CD8-positive, alpha-beta T cell (primary cell): ENCODE measurements at regions of chr1 and their contacts with region 1.

Region 1: GRCh38 chr1:11114966-11115365 is 15.3 kb upstream of the EXOSC10 start:
- DNase-seq: no peak
- ATAC-seq: no peak
- H3K4me3 ChIP-seq: no peak overlapping the region
- H3K4me3 Mint-ChIP-seq: no peak overlapping the region
- H3K27ac ChIP-seq: no peak overlapping the region
- H3K27ac Mint-ChIP-seq: no peak overlapping the region
- H3K4me1 ChIP-seq: no peaks in the 10 kb centered on the region
- H3K4me1 Mint-ChIP-seq: no peaks in the 10 kb centered on the region
- H3K27me3 ChIP-seq: no peaks in the 10 kb centered on the region
- H3K27me3 Mint-ChIP-seq: no peaks in the 10 kb centered on the region
- CTCF ChIP-seq: no peak

Region 2: DNA sequence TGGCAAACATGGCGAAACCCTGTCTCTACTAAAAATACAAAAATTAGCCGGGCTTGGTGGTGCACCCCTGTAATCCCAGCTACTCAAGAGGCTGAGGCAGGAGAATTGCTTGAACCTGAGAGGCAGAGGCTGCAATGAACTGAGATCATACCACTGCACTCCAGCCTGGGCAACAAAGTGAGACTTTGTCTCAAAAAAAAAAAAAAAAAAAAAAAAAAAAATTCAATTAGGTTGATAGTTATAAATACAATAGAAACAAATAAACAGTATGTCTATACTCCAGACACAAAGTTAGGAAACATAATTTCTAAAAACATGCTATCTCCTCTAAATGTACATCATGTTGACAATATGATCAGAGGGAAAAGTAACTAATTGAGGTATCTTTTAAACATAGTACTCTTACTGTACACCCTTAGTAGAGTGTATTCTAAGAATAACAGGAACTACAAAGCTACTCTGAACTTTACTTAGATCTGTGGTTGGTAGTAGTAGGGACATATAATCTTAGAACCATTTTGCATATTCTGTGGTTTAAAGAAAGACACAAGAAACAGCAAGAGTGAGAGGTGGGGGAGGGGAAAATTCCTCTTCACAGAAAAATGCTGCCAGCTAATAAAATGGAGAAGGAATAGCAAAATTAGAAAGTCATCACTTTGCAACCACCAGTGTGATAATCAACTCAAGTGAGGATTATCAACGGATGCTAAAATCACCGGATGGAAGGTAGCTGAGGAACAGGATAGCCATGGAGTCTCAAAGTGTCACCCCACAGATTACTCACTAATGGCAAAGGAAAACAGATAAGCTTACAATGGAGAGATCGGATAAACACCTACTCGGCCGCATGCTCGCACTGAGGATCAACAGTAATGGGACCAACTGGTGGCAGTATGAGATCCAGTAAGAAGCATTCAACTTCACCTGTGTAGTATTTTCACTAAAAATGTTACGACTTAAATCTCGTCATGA is 112.4 kb after region 1 on chr1:
- CTCF ChIA-PET with region 1: no interaction called
- POLR2A ChIA-PET with region 1: no interaction called
- intact Hi-C with region 1: loop called in 1 of 2 experiments (anchors 10 kb)
- DNase-seq: no peak
- ATAC-seq: no peak
- H3K4me3 ChIP-seq: no peak overlapping the region
- H3K4me3 Mint-ChIP-seq: no peak overlapping the region
- H3K27ac ChIP-seq: no peak overlapping the region
- H3K27ac Mint-ChIP-seq: peak overlapping the region; percentile 77
- H3K4me1 ChIP-seq: peaks cover 5% of the 10 kb centered on the region
- H3K4me1 Mint-ChIP-seq: peaks cover 16% of the 10 kb centered on the region
- H3K27me3 ChIP-seq: no peaks in the 10 kb centered on the region
- H3K27me3 Mint-ChIP-seq: no peaks in the 10 kb centered on the region
- CTCF ChIP-seq: no peak

Region 3: DNA sequence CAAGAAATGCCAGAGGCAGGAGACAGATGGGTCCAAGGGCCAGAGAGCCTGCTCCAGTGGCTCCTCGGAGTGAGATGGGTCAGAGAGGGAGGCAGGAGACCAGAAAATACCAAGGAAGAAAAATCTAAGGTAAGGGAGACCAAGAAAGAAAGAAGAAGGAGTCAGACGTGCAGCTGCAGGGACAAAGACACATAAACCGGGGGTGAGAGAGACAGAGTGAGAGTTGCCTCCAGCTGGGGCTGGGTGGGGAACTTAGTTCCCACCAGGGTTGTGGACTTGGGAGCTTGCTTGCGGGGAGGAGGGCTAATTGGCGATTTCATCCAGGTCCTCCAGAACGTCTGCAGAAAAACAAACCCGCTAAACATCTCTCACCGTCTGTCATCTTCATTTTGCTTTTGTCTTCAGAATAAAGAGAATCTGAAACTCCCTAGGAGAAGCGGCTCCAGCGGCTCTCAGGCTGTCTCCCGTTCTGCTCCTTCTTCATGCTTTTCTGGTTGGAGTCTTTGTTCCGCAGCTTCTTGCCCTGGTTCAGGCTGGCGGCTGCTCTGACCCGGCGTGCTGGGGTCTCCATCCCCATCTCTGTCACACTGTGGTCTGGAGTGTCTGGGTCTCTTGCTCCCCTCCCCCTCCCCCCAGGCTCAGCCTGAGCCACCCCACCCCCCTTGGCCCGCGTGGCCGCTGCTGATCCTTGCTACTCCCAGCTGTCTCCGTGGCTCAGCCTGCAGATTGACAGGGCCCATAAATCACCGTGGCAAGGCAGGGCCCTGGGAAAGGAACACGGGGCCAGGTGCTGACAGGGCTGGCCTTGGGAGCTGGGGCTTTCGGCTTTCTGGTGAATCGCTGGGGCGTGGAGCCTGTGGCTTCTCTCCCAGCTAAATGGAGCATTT is 224.6 kb after region 1 on chr1:
- CTCF ChIA-PET with region 1: no interaction called
- POLR2A ChIA-PET with region 1: no interaction called
- intact Hi-C with region 1: no loop called
- DNase-seq: no peak
- ATAC-seq: no peak
- H3K4me3 ChIP-seq: no peak overlapping the region
- H3K4me3 Mint-ChIP-seq: no peak overlapping the region
- H3K27ac ChIP-seq: no peak overlapping the region
- H3K27ac Mint-ChIP-seq: no peak overlapping the region
- H3K4me1 ChIP-seq: peaks cover 6% of the 10 kb centered on the region
- H3K4me1 Mint-ChIP-seq: peaks cover 13% of the 10 kb centered on the region
- H3K27me3 ChIP-seq: no peaks in the 10 kb centered on the region
- H3K27me3 Mint-ChIP-seq: peaks cover 11% of the 10 kb centered on the region
- CTCF ChIP-seq: no peak